Activated naive CD4-positive, alpha-beta T cell treated with anti-CD3 and anti-CD28 coated beads for 36 hours (primary cell): ENCODE measurements at regions of chr4 and their contacts with region 1.

Region 1: GRCh38 chr4:101527188-101527587 is 179.9 kb upstream of the PPP3CA start:
- DNase-seq: peak; percentile 88
- H3K4me3 Mint-ChIP-seq: no peak overlapping the region
- H3K27ac Mint-ChIP-seq: no peak overlapping the region
- H3K4me1 Mint-ChIP-seq: peaks cover 15% of the 10 kb centered on the region
- H3K27me3 Mint-ChIP-seq: peaks cover 45% of the 10 kb centered on the region

Region 2: GRCh38 chr4:101205916-101206315 is 321.3 kb before region 1 on chr4:
- CTCF ChIA-PET with region 1: no interaction called
- intact Hi-C with region 1: loop called (anchors 5 kb)
- DNase-seq: peak; percentile 60
- H3K4me3 Mint-ChIP-seq: no peak overlapping the region
- H3K27ac Mint-ChIP-seq: no peak overlapping the region
- H3K4me1 Mint-ChIP-seq: peaks cover 24% of the 10 kb centered on the region
- H3K27me3 Mint-ChIP-seq: no peaks in the 10 kb centered on the region

Region 3: DNA sequence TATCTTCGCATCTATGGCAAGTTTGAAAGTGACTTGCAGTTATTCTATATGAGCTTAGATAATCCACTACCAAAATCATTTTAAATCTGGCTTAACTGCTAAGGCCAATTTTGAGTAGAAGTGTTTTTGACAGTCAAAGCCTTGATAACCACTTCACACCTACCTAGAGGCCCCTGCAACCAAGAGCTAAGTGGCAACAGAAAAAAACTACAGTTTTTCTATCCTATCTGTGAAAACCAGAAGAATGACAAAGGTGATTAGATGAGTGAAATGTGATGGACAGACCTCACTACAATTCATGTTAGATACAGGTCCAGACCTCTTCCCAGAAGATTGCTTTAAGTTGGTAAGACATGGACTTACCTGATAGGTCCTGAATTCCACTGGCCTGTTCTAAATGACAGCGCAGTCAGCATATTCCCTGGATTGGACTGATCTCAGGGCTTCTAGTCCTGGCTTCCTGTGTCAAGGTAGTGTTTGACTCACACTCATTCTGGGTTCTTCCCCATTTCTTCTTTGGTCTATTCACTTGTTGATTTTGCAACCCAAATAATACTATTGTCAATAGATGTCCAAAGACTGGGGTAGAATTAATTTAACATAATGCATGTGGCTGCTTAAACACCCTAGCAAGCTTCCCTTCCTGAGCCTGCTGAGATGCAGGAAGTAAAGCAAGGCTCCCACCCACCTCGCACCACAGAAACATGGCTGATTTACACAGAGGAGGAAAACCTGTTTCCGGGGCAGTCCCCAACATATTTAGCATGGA is 244.9 kb before region 1 on chr4:
- CTCF ChIA-PET with region 1: no interaction called
- intact Hi-C with region 1: loop called (anchors 5 kb)
- DNase-seq: peak; percentile 72
- H3K4me3 Mint-ChIP-seq: no peak overlapping the region
- H3K27ac Mint-ChIP-seq: no peak overlapping the region
- H3K4me1 Mint-ChIP-seq: peaks cover 42% of the 10 kb centered on the region
- H3K27me3 Mint-ChIP-seq: no peaks in the 10 kb centered on the region

Region 4: DNA sequence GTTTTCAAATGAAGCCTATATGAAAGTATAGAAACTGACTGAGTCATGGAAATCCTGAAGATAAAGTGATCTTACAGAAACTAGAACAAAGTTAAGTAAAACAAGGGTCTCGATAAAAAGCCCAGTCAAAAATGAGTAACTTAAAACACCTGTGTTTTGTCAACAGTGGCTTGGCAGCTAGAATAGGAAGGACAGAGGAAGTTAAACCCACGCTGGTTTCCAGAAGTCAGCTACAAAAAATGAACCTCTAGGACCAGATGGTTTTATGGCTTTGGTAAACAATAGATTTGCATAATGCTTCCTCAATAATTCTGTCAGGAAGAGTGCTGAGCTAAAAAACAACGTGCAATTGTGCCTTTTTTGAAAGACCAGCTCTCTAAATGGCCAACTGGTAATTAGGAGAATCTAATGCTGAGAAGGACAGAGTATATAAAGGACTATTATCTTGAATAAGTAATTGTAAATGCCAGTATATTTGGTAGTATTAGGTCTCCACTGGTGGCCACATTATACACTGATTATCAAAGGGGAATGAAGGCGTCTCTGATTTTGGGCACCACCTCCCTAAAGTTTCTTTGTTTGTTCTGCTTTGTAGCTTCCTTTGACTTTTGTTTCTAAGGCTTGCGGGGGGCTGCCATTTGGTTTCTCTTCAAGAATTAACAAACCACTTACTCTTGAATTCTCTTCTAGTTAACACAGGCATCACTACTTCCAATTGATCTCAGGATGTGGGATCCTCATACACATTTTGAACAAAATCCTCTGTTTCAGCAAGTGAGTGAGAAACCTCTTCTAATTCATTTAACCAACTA is 107.7 kb before region 1 on chr4:
- CTCF ChIA-PET with region 1: no interaction called
- intact Hi-C with region 1: loop called (anchors 1 kb)
- DNase-seq: no peak
- H3K4me3 Mint-ChIP-seq: no peak overlapping the region
- H3K27ac Mint-ChIP-seq: no peak overlapping the region
- H3K4me1 Mint-ChIP-seq: peaks cover 36% of the 10 kb centered on the region
- H3K27me3 Mint-ChIP-seq: peaks cover 43% of the 10 kb centered on the region

Region 5: DNA sequence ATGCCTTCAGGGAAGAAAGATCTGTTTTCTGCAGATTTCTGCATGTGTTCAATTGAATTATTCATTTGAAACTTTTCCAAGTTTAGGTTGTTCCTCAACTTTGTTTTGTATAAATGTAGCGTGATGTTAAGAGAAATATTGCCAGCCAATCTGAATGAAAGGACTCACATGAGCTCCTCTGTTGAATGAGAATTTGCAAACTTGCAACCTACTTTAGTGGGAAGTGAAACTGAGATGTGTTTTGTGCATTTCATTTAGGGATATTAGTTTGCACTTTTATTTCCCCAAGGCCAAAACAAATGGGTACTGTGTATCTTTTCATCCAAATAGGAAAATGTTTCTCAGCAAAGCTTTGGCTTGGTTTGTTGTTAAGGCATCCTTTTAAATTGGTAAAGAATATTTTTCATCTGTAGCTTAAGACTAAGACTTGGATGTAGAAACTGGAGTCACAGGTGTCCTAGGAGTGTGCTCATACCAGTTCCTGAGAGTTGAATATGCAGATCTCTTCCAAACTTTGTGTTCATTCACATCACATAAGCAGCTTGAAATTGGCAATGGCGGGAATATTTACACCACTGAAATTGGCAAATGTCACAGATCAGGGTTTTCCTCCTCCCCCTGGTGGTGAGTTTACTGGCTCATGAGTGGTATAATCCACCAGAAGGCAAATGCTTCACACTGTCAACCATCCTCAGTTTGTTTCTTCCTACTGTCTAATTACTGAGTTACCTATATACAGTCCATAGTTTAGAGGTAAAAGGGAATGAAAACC is 69.8 kb after region 1 on chr4:
- CTCF ChIA-PET with region 1: no interaction called
- intact Hi-C with region 1: loop called (anchors 1 kb)
- DNase-seq: peak; percentile 33
- H3K4me3 Mint-ChIP-seq: no peak overlapping the region
- H3K27ac Mint-ChIP-seq: no peak overlapping the region
- H3K4me1 Mint-ChIP-seq: no peaks in the 10 kb centered on the region
- H3K27me3 Mint-ChIP-seq: peaks cover 1% of the 10 kb centered on the region

Region 6: DNA sequence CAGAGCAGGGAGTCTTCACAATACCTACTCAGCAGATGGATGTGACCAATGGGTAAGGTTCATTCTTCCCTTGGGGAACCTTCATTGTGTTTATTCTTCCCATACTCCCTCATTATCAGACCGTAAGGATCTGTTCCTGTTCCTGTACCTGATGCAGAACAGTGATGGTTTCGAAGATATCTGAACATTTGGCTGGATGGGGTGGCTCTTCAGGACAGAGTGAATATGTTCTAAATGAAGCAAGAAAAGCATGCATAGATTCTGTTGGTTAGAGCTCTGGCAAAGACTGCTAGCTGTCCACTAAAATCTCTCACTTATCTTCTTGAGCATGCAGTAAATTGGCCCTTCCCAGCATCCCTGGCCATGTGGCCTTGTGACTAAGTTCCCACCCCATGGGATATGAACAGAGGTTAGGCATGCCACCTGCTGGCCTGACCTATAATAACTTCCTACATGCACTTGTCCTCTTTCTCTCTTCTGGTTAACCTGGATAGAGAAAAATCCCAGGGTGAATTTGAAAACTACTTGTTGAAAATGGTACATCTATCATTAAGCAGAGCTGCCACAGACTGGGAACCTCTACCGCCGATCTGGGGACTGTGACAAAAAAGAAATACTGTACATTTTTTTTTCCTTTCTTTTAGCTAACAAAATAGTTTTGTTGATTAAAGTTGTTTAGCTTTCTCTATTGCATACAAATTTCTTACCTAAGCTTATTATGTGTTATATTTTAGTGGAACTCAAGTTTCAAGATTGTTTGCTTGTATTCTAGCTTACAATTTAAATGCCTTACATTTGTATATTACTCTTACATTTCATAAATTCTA is 203.3 kb after region 1 on chr4:
- CTCF ChIA-PET with region 1: interaction called, 4 read pairs
- intact Hi-C with region 1: loop called (anchors 5 kb)
- DNase-seq: peak; percentile 76
- H3K4me3 Mint-ChIP-seq: no peak overlapping the region
- H3K27ac Mint-ChIP-seq: no peak overlapping the region
- H3K4me1 Mint-ChIP-seq: no peaks in the 10 kb centered on the region
- H3K27me3 Mint-ChIP-seq: no peaks in the 10 kb centered on the region

Region 7: DNA sequence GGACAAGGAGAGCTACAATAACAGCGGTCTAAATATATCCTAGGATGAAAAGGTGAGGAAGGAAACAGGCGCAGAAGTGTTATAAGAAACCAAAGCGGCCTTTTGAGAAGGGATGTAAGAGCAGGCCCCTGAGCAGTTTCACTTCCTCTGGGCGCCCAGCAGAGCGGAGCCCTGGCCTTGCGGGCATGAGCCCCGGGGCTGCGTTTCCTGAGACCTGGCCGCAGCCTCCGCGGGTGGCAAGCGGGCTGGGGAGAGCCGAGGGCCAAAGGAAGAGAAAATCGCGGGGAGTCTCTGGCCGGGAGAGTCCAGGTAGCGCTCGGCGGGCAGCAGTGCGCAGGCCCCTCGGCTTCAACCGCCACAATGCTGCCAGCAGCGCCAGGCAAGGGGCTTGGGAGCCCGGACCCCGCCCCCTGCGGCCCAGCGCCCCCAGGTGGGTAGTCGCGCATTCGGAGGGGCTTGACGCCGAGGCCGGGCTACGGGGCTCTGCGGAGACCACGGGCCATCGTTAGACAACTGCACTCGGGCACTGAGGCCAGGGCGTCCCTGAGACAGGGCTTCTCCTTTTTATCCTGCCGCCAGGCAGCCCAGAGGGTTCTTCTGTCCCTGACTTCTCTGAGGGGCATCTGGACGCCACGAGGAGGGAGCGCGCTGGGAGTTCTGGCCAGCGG is 263.5 kb after region 1 on chr4 and contains the start of gene BANK1:
- CTCF ChIA-PET with region 1: no interaction called
- intact Hi-C with region 1: no loop called
- DNase-seq: peak; percentile 14
- H3K4me3 Mint-ChIP-seq: peak within 1 kb of the TSS; percentile 57
- H3K27ac Mint-ChIP-seq: no peak within 1 kb of the TSS
- H3K4me1 Mint-ChIP-seq: peaks cover 9% of the 10 kb centered on the region
- H3K27me3 Mint-ChIP-seq: peaks cover 35% of the 10 kb centered on the region
- total RNA-seq, gene BANK1: 0.07 to 0.17 TPM

Region 8: GRCh38 chr4:101801958-101802357 is 274.8 kb after region 1 on chr4:
- CTCF ChIA-PET with region 1: no interaction called
- intact Hi-C with region 1: no loop called
- DNase-seq: no peak
- H3K4me3 Mint-ChIP-seq: no peak overlapping the region
- H3K27ac Mint-ChIP-seq: no peak overlapping the region
- H3K4me1 Mint-ChIP-seq: no peaks in the 10 kb centered on the region
- H3K27me3 Mint-ChIP-seq: peaks cover 10% of the 10 kb centered on the region

Region 9: DNA sequence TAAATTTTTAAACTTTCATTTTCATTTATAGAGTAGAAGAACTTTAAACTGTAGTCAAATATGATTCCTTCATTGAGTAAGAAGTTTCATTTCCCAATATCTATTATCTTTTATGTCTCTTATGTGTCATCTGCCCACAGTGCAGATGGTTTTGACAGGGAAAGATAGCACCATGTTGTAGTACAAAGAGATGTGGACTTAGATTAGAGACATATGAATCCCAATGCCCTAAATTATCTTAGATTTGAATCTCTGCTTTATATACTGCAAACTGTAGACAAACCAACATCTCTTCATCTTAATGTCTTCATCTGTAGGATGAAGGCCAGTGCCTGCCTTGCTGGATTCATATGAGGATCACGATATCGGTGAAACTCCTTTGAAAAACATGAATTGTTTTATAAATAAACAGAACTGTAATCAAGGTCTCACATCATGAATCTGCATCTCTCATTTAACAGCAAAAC is 480.8 kb after region 1 on chr4:
- CTCF ChIA-PET with region 1: no interaction called
- intact Hi-C with region 1: loop called (anchors 1 kb)
- DNase-seq: peak; percentile 26
- H3K4me3 Mint-ChIP-seq: no peak overlapping the region
- H3K27ac Mint-ChIP-seq: no peak overlapping the region
- H3K4me1 Mint-ChIP-seq: peaks cover 7% of the 10 kb centered on the region
- H3K27me3 Mint-ChIP-seq: no peaks in the 10 kb centered on the region